ENCODE measurements at regions of chr6 and their contacts with region 1.

Region 1: GRCh38 chr6:16669227-16669626 is 92.0 kb downstream of the ATXN1 start:
- DNase-seq: peak; percentile 94
- H3K4me3 ChIP-seq: no peak overlapping the region
- H3K27ac ChIP-seq: peak overlapping the region; percentile 69
- H3K4me1 ChIP-seq: peaks cover 17% of the 10 kb centered on the region
- H3K27me3 ChIP-seq: no peaks in the 10 kb centered on the region
- CTCF ChIP-seq: no peak
- POLR2A ChIP-seq: no peak

Region 2: DNA sequence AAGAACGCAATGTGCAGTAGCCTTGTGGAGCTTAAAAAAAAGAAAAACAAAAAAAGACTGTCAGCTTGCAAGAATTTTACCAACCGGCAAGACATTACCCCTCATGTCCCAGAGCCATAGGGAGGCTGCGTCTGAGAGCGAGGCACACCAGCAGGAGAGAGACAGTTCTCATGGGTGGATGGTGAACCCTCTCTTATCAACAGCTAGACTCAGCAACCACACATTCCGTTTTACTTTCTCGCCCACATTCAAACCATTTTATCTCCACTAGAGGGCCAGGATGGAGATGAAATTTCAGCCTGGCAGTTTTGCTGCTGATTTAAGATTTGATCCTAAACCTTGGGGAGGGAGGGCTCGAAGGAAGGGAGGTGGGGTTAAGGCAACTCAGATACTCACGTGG is 155.0 kb before region 1 on chr6:
- CTCF ChIA-PET with region 1: interaction called, 3 read pairs
- POLR2A ChIA-PET with region 1: no interaction called
- dilution Hi-C with region 1: no loop called
- intact Hi-C with region 1: loop called (anchors 5 kb)
- DNase-seq: peak; percentile 60
- H3K4me3 ChIP-seq: no peak overlapping the region
- H3K27ac ChIP-seq: no peak overlapping the region
- H3K4me1 ChIP-seq: peaks cover 6% of the 10 kb centered on the region
- H3K27me3 ChIP-seq: no peaks in the 10 kb centered on the region
- CTCF ChIP-seq: peak; percentile 36 to 55
- POLR2A ChIP-seq: no peak

Region 3: DNA sequence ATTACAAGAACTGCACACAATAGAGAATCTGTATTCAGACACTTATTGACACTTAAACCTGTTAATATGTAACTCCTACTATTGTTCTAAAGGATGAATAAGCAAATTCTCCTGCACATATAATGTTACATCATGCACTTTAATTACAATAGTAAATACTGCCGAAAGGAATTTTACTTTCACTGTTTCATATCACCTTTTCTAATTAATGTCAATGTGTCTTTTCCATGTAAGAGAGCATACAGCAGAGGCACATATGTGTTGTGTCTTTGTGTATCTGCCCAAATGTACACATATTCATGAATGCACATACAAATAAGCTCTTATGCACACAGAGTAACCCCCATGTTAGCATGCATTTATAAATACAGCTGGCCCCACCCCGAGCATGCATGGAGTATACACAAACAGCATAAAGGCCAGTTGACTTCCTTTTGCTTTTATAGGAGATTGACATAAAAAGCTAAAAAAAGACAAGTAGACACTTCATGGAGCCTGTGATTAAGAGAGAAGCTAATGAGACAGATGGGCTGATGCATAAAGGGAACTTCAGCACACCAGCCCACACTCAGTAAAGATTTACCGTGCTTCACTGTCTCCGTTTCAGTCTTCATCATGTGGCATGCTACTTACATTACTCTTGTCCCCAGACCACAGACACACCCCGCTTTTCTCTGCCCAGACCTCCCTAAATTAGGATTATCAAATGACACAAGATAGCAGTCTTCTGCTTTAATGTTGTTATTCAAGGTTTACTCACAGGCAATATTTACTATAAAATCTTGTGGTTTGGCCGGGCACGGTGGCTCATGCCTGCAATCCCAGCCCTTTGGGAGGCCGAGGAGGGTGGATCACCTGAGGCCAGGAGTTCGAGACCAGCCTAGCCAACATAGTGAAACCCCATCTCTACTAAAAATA is 92.5 kb before region 1 on chr6:
- CTCF ChIA-PET with region 1: no interaction called
- POLR2A ChIA-PET with region 1: no interaction called
- dilution Hi-C with region 1: no loop called
- intact Hi-C with region 1: no loop called
- DNase-seq: no peak
- H3K4me3 ChIP-seq: no peak overlapping the region
- H3K27ac ChIP-seq: no peak overlapping the region
- H3K4me1 ChIP-seq: no peaks in the 10 kb centered on the region
- H3K27me3 ChIP-seq: no peaks in the 10 kb centered on the region
- CTCF ChIP-seq: no peak
- POLR2A ChIP-seq: no peak

Region 4: DNA sequence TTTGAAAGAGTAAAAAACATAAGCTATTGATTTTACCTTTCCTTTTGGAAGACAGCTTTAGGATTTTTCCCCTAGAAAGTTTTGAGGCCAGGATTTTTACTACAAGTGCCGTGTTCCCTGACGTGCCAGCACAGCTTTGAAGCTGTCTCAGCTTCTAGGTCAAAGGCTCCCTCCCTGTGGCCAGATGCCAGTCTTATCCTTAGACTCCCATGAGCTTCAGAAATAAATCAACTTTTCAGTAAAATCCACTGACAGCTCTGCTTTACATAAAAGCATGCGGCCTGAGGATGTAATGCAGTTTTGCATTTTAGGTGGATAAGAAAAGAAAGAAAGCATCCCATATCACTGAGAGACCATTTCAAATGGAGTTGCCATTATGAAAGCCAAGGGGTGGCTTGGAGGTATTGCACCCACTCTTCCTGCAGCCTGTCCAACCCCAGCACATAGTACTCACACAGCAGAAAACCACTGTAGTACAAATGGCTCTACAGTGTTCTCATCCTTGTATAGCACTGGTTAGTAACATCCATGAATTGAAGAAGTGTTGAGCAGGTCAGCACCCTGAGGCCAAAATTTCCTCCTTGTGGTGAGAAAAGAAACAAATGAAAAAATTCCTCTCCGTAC is 107.3 kb after region 1 on chr6:
- CTCF ChIA-PET with region 1: no interaction called
- POLR2A ChIA-PET with region 1: no interaction called
- dilution Hi-C with region 1: no loop called
- intact Hi-C with region 1: no loop called
- DNase-seq: no peak
- H3K4me3 ChIP-seq: no peak overlapping the region
- H3K27ac ChIP-seq: no peak overlapping the region
- H3K4me1 ChIP-seq: no peaks in the 10 kb centered on the region
- H3K27me3 ChIP-seq: peaks cover 0 to 1% of the 10 kb centered on the region in 2 experiments
- CTCF ChIP-seq: no peak
- POLR2A ChIP-seq: no peak